A549 (cell line): ENCODE measurements at regions of chr7 and their contacts with region 1.

Region 1: DNA sequence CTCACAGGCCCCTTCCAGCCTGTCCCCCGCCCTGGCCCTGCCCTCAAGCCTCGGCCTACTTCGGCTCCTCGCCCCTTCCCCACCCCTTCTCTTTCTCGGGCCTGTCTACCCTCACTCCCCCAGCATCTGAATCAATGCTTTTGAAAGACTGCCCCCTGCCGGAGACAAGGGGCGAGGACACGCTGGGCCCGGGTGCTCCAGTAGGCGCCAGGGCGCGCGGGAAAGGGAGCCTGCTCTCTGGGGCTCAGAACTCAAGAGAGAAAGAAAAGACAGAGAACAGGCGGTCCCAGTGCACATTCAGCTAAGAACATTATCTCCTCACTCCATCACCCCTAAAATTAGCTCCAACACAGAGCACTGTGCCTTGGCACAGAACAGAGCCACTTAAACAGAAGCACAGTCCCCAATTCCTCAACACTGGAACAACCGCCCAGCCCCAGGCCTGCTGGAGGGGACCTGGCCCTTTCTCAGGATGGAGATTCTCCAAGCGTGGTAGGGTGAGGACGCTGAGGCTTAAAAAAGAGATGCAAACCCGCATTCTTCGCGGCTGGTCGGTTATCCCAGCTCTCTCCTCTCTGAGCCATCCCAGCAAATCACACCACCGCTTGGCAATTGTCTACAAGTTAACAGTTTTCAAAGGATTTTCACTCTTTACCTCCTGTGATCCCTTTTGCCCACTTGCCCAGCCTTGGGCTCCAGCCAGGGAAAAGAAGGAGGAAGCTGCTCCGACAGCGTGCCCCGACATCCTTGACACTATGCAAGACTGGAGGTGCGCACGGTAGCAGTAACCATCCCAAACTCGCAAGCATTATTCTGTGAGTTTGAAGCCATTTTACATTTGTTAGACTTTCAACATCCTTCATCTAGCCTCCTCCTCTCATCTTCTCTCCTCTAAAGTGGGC is 2.1 kb downstream of the GIGYF1 start:
- DNase-seq: peak; percentile 74 to 93
- ATAC-seq: peak; percentile 72 to 94; a peak in 5 of 6 replicates
- H3K4me3 ChIP-seq: no peak overlapping the region
- H3K27ac ChIP-seq: no peak overlapping the region
- H3K4me1 ChIP-seq: peaks cover 26% of the 10 kb centered on the region
- CTCF ChIP-seq: peak; percentile 87
- EP300 ChIP-seq: no peak
- POLR2A ChIP-seq: no peak
- RAD21 ChIP-seq: peak; percentile 75 to 78

Region 2: DNA sequence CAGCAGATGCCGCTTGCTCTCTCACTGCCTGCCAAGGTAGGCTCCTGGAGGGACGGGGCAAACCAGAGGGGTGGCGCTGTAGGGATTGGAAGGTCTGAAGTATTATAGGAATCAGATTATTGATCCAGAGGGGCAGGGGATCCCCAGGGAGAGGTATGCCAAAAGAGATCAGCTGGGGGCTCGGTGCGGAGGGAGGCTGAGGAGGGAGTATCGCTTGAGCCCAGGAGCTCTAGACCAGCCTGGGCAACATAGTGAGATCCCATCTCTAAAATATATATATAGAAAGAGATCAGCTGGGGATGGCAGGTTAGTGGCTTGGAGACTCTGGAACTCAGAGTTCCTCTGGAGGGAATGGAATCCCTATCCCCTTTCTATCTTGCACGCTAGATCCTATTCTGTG is 96.7 kb before region 1 on chr7:
- CTCF ChIA-PET with region 1: interaction called, 11 read pairs
- POLR2A ChIA-PET with region 1: no interaction called
- DNase-seq: no peak
- ATAC-seq: no peak
- H3K4me3 ChIP-seq: no peak overlapping the region
- H3K27ac ChIP-seq: no peak overlapping the region
- H3K4me1 ChIP-seq: no peaks in the 10 kb centered on the region
- CTCF ChIP-seq: no peak
- EP300 ChIP-seq: no peak
- POLR2A ChIP-seq: no peak
- RAD21 ChIP-seq: no peak

Region 3: GRCh38 chr7:100611974-100612729 is 79.8 kb before region 1 on chr7 and contains the start of gene MOSPD3:
- CTCF ChIA-PET with region 1: interaction called, 32 read pairs
- POLR2A ChIA-PET with region 1: interaction called, 4 read pairs
- DNase-seq: peak; percentile 99 to 100
- ATAC-seq: peak; percentile 97
- H3K4me3 ChIP-seq: peak within 1 kb of the TSS; percentile 67
- H3K27ac ChIP-seq: peak within 1 kb of the TSS; percentile 83 to 90
- H3K4me1 ChIP-seq: peaks cover 4% of the 10 kb centered on the region; the same call in 1 of the 3 replicates
- CTCF ChIP-seq: no peak
- EP300 ChIP-seq: no peak
- POLR2A ChIP-seq: peak; percentile 43
- RAD21 ChIP-seq: no peak
- polyA plus RNA-seq, gene MOSPD3: 4.6 and 6.1 TPM in 2 replicates

Region 4: GRCh38 chr7:100655908-100656674 is 35.8 kb before region 1 on chr7 and contains the start of gene ACTL6B:
- CTCF ChIA-PET with region 1: interaction called, 23 read pairs
- POLR2A ChIA-PET with region 1: no interaction called
- DNase-seq: peak; percentile 36 to 72
- ATAC-seq: peak; percentile 66 to 75; a peak in 5 of 6 replicates
- H3K4me3 ChIP-seq: no peak within 1 kb of the TSS
- H3K27ac ChIP-seq: no peak within 1 kb of the TSS
- H3K4me1 ChIP-seq: peaks cover 6% of the 10 kb centered on the region; the same call in 2 of the 3 replicates
- CTCF ChIP-seq: no peak
- EP300 ChIP-seq: no peak
- POLR2A ChIP-seq: no peak
- RAD21 ChIP-seq: no peak
- polyA plus RNA-seq, gene ACTL6B: not detected in 2 replicates

Region 5: GRCh38 chr7:100719523-100720319 is 27.8 kb after region 1 on chr7:
- CTCF ChIA-PET with region 1: interaction called, 13 read pairs
- POLR2A ChIA-PET with region 1: no interaction called
- DNase-seq: peak in 1 of 2 experiments; percentile 64
- ATAC-seq: peak; percentile 68 to 80
- H3K4me3 ChIP-seq: peak overlapping the region; percentile 40
- H3K27ac ChIP-seq: peak overlapping the region in 1 of 2 experiments; percentile 70; a peak in 1 of 6 replicates
- H3K4me1 ChIP-seq: peaks cover 11% of the 10 kb centered on the region; the same call in 2 of the 3 replicates
- CTCF ChIP-seq: peak; percentile 55
- EP300 ChIP-seq: no peak
- POLR2A ChIP-seq: no peak
- RAD21 ChIP-seq: peak; percentile 77 to 80